ENCODE measurements at regions of chr12 and their contacts with region 1.

Region 1: DNA sequence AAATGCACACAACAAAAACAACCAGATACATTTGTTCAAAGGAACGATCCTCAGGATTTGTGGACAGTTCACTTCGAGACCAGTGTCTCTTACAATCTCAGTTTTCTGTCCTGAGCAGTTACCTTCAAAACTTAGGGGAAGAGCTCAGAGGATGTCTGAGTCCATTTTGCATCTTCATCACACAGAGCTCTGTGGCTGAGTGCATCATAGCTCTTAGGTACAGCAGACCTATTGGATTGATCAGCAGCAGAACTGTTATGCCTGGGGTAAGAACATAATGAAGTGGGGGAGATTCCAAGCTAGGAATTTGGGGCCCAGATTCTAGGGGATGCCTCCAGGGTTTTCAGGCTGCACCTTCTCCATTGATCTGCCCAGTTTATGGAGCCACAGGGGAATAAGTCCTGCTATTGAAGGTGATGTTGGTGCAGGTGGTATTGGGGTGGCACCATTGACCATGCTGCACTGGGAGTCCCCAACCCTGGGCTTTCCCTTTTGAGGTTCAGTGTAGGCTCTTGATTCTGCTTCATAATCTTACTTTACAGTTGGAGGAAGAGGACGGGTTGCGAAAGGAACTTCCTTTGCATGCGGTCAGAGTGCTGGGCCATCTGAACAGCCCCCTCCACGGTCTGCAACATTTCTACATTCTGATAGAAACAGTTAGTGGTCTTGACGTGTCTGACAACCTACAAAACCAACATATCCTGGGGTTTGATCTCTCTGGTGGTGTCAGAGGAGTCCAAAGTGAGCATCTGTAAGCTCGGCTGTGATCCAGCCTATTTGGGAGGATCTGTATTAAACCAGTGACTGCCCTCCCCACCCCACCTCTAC is 112.8 kb downstream of the CHST11 start:
- DNase-seq: peak; percentile 18 to 91 (median 53)
- ATAC-seq: peak; percentile 87
- H3K4me3 ChIP-seq: peak overlapping the region in 1 of 2 experiments; percentile 14
- H3K4me3 Mint-ChIP-seq: peak overlapping the region; percentile 61
- H3K27ac ChIP-seq: peak overlapping the region in 1 of 2 experiments; percentile 57
- H3K27ac Mint-ChIP-seq: peak overlapping the region; percentile 86
- H3K4me1 ChIP-seq: peaks cover 32% of the 10 kb centered on the region
- H3K4me1 Mint-ChIP-seq: peaks cover 56% of the 10 kb centered on the region
- H3K27me3 ChIP-seq: no peaks in the 10 kb centered on the region
- H3K27me3 Mint-ChIP-seq: no peaks in the 10 kb centered on the region
- CTCF ChIP-seq: no peak

Region 2: DNA sequence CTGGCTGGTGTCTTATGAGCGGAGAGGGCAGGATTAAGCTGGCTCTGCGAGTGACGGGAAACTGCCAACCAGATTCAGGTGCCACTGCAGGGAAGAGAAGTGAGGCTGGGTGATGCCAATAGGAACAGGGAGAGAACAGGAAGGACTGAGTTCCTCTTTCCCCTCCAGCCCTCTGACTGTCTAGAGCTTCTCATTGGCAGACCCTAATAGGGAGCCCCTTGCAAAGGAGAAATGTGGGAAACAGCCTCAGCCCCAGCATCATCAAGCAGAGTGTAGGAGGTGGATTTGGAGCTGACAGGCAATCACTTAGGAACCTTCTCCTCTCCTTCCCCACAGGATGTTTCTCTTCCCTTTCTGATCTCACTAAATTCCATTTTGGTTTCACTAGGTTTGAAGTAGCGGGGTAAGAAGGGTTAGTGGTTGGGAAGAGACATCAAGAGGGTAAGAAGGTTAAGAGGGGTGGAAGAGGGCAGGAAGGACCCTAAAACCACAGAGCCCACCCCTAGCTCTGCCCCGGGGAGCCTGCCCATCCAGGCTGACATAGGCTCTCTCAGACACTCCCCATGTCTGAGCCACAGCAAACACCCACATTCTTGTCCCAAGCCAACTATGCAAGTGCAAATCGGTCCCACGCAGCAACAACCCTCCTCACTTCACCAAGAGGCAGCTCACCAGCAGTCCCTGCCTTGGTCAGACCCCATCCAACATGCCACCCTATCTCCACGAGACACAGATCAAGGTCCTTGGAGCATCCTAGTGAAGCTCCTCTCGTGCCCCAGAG is 871.4 kb before region 1 on chr12:
- CTCF ChIA-PET with region 1: no interaction called
- POLR2A ChIA-PET with region 1: no interaction called
- intact Hi-C with region 1: no loop called
- DNase-seq: no peak
- ATAC-seq: no peak
- H3K4me3 ChIP-seq: no peak overlapping the region
- H3K4me3 Mint-ChIP-seq: no peak overlapping the region
- H3K27ac ChIP-seq: no peak overlapping the region
- H3K27ac Mint-ChIP-seq: no peak overlapping the region
- H3K4me1 ChIP-seq: no peaks in the 10 kb centered on the region
- H3K4me1 Mint-ChIP-seq: no peaks in the 10 kb centered on the region
- H3K27me3 ChIP-seq: no peaks in the 10 kb centered on the region
- H3K27me3 Mint-ChIP-seq: peaks cover 16% of the 10 kb centered on the region
- CTCF ChIP-seq: no peak

Region 3: DNA sequence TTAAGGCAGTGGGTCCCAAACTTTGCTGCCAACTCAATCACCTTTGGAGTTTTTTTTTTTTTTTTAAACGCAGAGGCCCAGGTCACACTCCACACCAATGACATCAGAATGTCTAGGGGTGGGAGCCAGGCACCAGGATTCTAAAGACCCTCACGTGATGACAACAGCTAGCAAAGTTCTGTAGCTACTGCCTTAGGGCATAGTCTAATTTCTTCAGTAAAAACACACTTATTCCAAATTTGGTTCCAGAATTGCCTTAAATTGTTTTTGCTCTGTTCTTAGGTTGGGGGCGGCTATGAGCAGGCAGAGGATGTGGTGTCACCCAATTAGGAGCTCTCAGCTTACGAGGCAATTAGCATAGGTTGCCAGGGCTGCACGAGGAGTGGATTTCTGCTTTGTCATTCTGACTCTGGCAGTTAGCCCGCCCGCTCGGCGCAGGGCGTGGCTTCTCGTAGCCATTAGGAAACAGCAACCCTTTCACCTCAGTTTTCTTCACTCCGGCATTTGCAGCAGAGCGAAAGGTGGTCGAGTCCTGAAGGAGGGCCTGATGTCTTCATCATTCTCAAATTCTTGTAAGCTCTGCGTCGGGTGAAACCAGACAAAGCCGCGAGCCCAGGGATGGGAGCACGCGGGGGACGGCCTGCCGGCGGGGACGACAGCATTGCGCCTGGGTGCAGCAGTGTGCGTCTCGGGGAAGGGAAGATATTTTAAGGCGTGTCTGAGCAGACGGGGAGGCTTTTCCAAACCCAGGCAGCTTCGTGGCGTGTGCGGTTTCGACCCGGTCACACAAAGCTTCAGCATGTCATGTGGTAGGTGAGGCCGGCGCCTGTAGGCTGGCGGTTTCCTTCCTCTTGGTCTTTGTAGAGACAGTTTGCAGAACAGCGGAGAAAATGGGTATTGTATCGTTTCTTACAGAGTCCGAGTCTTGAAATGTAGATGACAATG is 282.8 kb before region 1 on chr12:
- CTCF ChIA-PET with region 1: no interaction called
- POLR2A ChIA-PET with region 1: no interaction called
- intact Hi-C with region 1: no loop called
- DNase-seq: peak; percentile 75 to 95 (median 88)
- ATAC-seq: peak; percentile 87
- H3K4me3 ChIP-seq: peak overlapping the region; percentile 80 to 86
- H3K4me3 Mint-ChIP-seq: peak overlapping the region; percentile 97
- H3K27ac ChIP-seq: peak overlapping the region; percentile 64 to 90
- H3K27ac Mint-ChIP-seq: peak overlapping the region; percentile 96
- H3K4me1 ChIP-seq: peaks cover 24% of the 10 kb centered on the region
- H3K4me1 Mint-ChIP-seq: peaks cover 35% of the 10 kb centered on the region
- H3K27me3 ChIP-seq: no peaks in the 10 kb centered on the region
- H3K27me3 Mint-ChIP-seq: no peaks in the 10 kb centered on the region
- CTCF ChIP-seq: no peak

Region 4: DNA sequence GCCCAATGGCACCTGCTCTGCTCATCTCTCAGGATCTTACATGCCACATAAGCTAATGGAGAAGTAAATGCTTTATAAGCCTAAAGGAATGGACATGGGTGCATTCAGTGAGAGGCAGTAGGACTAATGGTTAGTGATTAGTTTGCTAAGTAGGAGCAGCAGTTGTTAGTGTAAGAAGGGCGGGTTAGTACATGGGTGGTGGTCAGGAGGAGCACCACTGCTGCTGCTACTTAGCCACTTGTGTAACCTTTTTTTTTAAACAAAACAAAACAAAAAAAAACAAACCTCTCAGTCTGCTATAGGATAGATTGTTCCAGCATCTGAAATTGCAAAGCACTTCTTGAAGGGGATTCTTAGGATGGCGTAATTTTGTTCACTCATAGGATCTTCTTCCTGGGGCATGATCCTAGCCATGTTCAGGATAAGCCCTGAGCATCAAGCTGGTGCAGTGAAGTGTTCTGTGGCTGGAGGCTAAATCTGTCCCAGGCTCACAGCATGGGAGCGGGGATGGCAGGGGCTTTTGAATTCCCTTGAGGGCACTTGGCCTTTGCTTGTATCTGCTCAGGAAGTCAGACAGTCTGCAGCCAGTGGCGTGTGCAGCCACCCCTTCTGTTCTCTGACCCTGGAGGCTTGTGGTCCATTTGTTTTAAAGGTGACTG is 49.2 kb before region 1 on chr12:
- CTCF ChIA-PET with region 1: interaction called, 4 read pairs
- POLR2A ChIA-PET with region 1: no interaction called
- intact Hi-C with region 1: loop called in 1 of 2 experiments (anchors 2 kb)
- DNase-seq: no peak
- ATAC-seq: no peak
- H3K4me3 ChIP-seq: no peak overlapping the region
- H3K4me3 Mint-ChIP-seq: no peak overlapping the region
- H3K27ac ChIP-seq: no peak overlapping the region
- H3K27ac Mint-ChIP-seq: peak overlapping the region; percentile 10
- H3K4me1 ChIP-seq: peaks cover 40% of the 10 kb centered on the region
- H3K4me1 Mint-ChIP-seq: peaks cover 89% of the 10 kb centered on the region
- H3K27me3 ChIP-seq: no peaks in the 10 kb centered on the region
- H3K27me3 Mint-ChIP-seq: no peaks in the 10 kb centered on the region
- CTCF ChIP-seq: no peak